Activated CD4-positive, alpha-beta memory T cell treated with anti-CD3 and anti-CD28 coated beads for 36 hours (primary cell): ENCODE measurements at regions of chr6 and their contacts with region 1.

Region 1: DNA sequence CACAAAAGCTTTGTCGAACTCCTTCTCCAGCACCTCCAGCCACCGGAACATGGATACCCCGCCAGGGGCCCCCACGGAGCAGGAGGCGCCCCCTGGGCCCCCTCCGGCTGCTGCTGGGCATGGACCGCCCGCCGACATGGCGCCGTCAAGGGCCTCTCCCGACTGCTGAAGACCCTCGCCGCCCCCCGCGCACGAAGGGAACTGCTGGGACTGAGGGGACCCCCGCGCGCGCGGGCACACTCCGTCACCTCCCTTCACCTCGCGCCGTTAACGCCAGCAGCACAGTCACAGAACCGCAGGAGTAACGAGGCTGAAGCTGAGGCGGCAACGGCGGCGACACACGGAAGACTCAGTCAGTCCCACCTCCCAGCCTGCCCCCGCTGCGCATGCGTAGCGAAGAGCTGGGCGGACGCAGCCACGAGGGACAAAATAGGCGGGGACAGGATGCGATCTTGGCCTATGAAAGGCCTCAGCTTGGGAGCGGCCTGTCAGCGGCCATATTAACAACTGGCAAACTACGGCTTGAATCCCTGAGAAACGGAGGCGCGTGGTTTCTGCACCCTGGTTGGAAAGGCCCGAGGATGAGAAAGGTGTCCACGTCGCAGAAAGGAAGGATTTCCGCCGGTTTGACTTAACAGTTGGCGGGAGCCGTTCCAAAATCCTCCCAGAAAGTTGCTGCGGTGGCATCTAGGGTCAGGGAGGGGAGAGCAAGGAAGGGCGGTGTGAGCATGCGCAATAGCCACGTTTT is at the start of gene GOPC:
- DNase-seq: peak; percentile 97
- H3K4me3 Mint-ChIP-seq: peak within 1 kb of the TSS; percentile 99
- H3K27ac Mint-ChIP-seq: peak within 1 kb of the TSS; percentile 90
- H3K4me1 Mint-ChIP-seq: peaks cover 36% of the 10 kb centered on the region
- H3K27me3 Mint-ChIP-seq: peaks cover 2% of the 10 kb centered on the region
- total RNA-seq, gene GOPC: 14.8 to 15.8 TPM

Region 2: GRCh38 chr6:116279260-116280063 is 1322.9 kb before region 1 on chr6 and contains the start of gene TSPYL1:
- CTCF ChIA-PET with region 1: no interaction called
- POLR2A ChIA-PET with region 1: no interaction called
- intact Hi-C with region 1: loop called (anchors 10 kb)
- DNase-seq: peak; percentile 97
- H3K4me3 Mint-ChIP-seq: peak within 1 kb of the TSS; percentile 91
- H3K27ac Mint-ChIP-seq: peak within 1 kb of the TSS; percentile 95
- H3K4me1 Mint-ChIP-seq: peaks cover 50% of the 10 kb centered on the region
- H3K27me3 Mint-ChIP-seq: no peaks in the 10 kb centered on the region
- total RNA-seq, gene TSPYL1: 41.4 to 42.0 TPM

Region 3: DNA sequence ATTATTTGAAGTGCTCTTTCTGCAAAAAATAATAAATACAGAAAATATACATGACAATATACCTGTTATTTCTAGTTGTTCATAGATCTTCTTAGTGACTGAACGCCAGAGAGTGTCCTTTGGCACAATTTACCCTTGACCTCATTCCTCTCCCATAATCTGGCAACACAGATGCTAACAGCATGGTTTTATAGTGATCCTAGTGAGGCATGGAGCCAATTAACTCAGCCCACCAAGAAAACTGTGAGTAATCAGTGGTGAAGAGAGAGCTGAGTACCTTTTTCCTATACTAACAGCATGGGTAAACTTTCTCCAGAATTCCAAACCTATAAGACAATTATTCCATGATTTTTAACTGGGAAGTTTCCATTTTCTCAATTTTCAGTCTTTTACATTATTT is 275.9 kb before region 1 on chr6:
- CTCF ChIA-PET with region 1: no interaction called
- POLR2A ChIA-PET with region 1: no interaction called
- intact Hi-C with region 1: no loop called
- DNase-seq: no peak
- H3K4me3 Mint-ChIP-seq: no peak overlapping the region
- H3K27ac Mint-ChIP-seq: no peak overlapping the region
- H3K4me1 Mint-ChIP-seq: no peaks in the 10 kb centered on the region
- H3K27me3 Mint-ChIP-seq: peaks cover 18% of the 10 kb centered on the region

Region 4: DNA sequence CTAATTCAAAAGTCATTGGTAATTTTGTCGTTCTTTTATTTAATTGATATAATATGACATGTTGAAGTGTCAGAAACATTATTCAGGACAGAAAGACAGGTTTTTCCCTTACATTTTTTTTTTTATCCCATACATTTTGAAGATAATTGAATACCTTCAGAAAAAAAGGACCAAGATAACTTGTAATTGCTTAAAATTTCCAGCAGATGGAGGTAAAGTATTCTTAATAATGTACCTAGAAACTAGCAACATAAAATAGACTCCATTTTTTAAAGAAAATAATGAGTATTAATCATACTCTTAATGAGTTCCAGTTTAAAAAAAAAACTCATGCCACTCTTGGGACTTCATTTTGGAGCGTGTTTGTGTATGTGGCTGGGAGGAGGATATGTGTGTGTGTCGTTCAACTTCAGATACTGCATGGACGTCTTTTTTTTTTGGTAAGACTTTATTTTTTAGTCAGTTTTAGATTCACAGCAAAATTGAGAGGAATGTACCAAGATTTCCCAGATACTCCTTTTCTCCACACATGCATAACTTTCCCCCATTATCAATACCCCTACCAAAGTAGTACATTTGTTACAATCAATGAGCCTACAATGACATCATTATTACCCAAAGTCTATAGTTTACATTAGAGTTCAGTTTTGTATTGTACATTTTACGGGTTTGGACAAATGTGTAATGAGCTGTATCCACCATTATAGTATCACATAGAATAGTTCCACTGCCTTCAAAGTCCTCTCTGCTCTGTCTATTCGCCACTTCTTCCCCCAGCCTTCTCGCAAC is 256.0 kb before region 1 on chr6:
- CTCF ChIA-PET with region 1: interaction called, 8 read pairs
- POLR2A ChIA-PET with region 1: no interaction called
- intact Hi-C with region 1: loop called (anchors 1 kb)
- DNase-seq: no peak
- H3K4me3 Mint-ChIP-seq: no peak overlapping the region
- H3K27ac Mint-ChIP-seq: no peak overlapping the region
- H3K4me1 Mint-ChIP-seq: no peaks in the 10 kb centered on the region
- H3K27me3 Mint-ChIP-seq: peaks cover 3% of the 10 kb centered on the region

Region 5: GRCh38 chr6:117463762-117464665 is 138.3 kb before region 1 on chr6:
- CTCF ChIA-PET with region 1: interaction called, 3 read pairs
- POLR2A ChIA-PET with region 1: no interaction called
- intact Hi-C with region 1: loop called (anchors 1 kb)
- DNase-seq: peak; percentile 33
- H3K4me3 Mint-ChIP-seq: peak overlapping the region; percentile 16
- H3K27ac Mint-ChIP-seq: peak overlapping the region; percentile 57
- H3K4me1 Mint-ChIP-seq: peaks cover 15% of the 10 kb centered on the region
- H3K27me3 Mint-ChIP-seq: peaks cover 13% of the 10 kb centered on the region

Region 6: GRCh38 chr6:117498159-117498558 is 104.2 kb before region 1 on chr6:
- CTCF ChIA-PET with region 1: no interaction called
- POLR2A ChIA-PET with region 1: no interaction called
- intact Hi-C with region 1: no loop called
- DNase-seq: no peak
- H3K4me3 Mint-ChIP-seq: no peak overlapping the region
- H3K27ac Mint-ChIP-seq: no peak overlapping the region
- H3K4me1 Mint-ChIP-seq: peaks cover 16% of the 10 kb centered on the region
- H3K27me3 Mint-ChIP-seq: no peaks in the 10 kb centered on the region

Region 7: DNA sequence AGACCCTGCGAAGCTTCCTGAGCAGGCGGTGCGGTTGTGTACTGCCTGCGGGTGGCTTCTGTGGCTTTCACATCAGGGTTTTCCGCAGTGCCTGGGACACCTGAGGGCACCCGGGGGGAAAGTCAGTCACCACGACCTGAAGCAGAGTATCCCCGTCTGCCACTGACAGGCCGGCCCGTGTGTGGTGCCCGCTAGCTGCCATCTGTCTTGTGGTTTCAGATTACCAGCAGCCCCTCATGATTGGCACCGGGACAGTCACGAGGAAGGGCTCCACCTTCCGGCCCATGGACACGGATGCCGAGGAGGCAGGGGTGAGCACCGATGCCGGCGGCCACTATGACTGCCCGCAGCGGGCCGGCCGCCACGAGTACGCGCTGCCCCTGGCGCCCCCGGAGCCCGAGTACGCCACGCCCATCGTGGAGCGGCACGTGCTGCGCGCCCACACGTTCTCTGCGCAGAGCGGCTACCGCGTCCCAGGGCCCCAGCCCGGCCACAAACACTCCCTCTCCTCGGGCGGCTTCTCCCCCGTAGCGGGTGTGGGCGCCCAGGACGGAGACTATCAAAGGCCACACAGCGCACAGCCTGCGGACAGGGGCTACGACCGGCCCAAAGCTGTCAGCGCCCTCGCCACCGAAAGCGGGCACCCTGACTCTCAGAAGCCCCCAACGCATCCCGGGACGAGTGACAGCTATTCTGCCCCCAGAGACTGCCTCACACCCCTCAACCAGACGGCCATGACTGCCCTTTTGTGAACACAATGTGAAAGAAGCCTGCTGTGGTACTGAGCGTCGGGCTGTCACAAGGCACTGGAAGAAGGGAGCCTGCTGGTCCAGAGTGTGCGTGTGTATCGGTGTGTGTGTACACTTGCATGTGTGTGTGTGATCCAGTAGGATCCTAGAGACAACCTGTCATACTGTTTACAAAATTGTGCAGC is 54.4 kb before region 1 on chr6:
- CTCF ChIA-PET with region 1: interaction called, 29 read pairs
- POLR2A ChIA-PET with region 1: interaction called, 11 read pairs
- intact Hi-C with region 1: loop called (anchors 1 kb)
- DNase-seq: peak; percentile 56
- H3K4me3 Mint-ChIP-seq: peak overlapping the region; percentile 73
- H3K27ac Mint-ChIP-seq: peak overlapping the region; percentile 64
- H3K4me1 Mint-ChIP-seq: peaks cover 33% of the 10 kb centered on the region
- H3K27me3 Mint-ChIP-seq: peaks cover 5% of the 10 kb centered on the region

Region 8: GRCh38 chr6:117568831-117569410 is 33.4 kb before region 1 on chr6:
- CTCF ChIA-PET with region 1: interaction called, 5 read pairs
- POLR2A ChIA-PET with region 1: no interaction called
- intact Hi-C with region 1: loop called (anchors 1 kb)
- DNase-seq: no peak
- H3K4me3 Mint-ChIP-seq: no peak overlapping the region
- H3K27ac Mint-ChIP-seq: no peak overlapping the region
- H3K4me1 Mint-ChIP-seq: peaks cover 17% of the 10 kb centered on the region
- H3K27me3 Mint-ChIP-seq: no peaks in the 10 kb centered on the region

Region 9: DNA sequence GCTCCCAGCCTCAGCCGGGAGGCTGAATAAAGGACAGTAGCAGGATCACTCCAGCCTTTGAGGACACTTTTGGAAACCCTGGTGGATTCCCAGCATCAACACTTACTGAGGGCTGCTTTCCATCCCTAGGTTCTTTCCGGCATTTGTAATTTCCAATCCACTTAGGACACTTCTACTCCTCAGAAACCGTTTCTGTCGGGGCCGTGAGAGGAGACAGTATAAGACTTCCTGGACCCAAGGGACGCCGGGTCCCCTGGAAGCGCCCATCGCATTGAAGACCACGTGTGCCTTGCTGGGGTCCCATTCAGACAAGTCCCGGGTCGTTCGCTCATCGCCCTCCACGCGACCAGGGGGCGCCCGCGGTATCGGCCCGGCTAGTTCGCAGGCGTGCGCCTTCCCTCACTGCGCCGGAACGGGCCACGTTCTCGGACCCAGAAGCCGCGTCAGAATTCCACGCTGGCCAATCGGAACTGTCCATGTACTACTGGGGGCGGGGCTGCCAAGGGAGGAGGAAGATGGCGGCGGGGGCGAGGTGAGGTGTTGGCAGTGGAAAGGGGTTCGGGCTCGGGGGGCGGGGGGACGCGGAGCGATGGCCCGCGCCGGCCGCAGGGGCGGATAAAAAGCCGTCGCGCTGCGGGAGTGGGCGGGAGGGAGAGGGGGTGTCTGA is 72.8 kb after region 1 on chr6 and contains the start of gene NUS1:
- CTCF ChIA-PET with region 1: interaction called, 3 read pairs
- POLR2A ChIA-PET with region 1: interaction called, 4 read pairs
- intact Hi-C with region 1: loop called (anchors 1 kb)
- DNase-seq: peak; percentile 99
- H3K4me3 Mint-ChIP-seq: peak within 1 kb of the TSS; percentile 95
- H3K27ac Mint-ChIP-seq: peak within 1 kb of the TSS; percentile 89
- H3K4me1 Mint-ChIP-seq: peaks cover 43% of the 10 kb centered on the region
- H3K27me3 Mint-ChIP-seq: no peaks in the 10 kb centered on the region
- total RNA-seq, gene NUS1: 33.6 to 33.9 TPM

Region 10: DNA sequence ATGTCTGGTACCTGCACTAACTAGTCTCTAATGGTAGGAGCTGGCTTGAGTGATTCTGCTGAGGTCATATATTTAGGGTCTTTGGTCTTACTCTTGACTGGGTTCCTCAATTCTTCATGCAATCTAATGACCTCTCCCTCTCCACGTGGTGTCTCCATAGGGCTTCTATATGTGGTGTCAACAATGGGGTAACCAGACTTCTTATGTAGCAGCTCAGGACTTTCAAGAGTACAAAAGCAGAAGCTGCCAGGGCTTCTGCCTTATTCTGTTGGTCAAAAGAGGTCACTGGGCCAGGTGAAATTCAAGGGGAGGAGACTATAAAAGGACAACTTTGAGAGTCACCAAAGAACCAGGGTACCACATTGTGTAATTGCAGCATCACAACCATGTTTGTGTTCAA is 127.3 kb after region 1 on chr6:
- CTCF ChIA-PET with region 1: no interaction called
- POLR2A ChIA-PET with region 1: no interaction called
- intact Hi-C with region 1: no loop called
- DNase-seq: no peak
- H3K4me3 Mint-ChIP-seq: no peak overlapping the region
- H3K27ac Mint-ChIP-seq: no peak overlapping the region
- H3K4me1 Mint-ChIP-seq: peaks cover 4% of the 10 kb centered on the region
- H3K27me3 Mint-ChIP-seq: peaks cover 3% of the 10 kb centered on the region